CD14-positive monocyte (primary cell): ENCODE measurements at regions of chr13 and their contacts with region 1.

Region 1: DNA sequence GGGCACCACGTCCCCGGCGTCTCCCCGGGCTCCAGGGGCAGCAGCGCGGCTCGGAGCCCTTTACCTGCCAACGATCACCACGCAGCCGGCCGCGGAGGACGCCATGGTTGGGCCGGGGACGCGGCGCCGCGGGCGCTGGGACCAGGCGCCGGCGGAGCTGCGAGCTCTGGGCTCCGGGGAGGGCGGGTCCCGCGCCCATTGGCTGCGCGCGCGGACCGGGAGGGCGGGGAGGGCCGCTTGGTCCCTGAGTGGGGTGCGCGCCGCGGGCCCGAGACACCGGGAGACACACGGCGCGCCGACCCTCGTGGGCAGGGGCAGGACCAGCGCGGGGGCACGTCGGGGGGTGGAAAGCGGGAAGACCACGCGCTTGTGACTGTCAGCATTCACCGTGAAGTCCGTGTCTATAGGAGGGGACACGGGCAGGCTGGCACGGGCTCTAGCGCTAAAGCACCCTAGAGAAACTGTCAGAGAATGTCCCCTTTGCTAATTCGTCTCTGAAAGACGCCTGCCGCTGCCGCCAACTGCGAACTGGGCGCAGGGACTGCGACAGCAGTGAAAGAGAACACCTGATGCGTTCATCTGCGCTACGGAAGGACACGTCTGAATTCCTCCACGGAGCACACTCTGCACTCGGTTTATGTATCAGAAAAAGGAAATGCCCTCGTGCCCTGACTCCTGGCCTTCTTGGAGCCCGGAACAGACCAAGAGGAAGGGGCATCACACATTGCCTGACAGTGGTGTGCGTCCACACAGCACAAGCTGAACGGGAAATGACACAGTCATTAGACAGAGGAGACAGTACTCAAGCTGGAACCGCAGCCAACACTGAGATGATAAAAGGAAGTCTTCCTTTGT is at the start of gene CRYL1:
- DNase-seq: peak; percentile 92 to 97 (median 97)
- H3K4me3 ChIP-seq: peak within 1 kb of the TSS; percentile 45 to 86 (median 78)
- H3K4me3 Mint-ChIP-seq: peak within 1 kb of the TSS; percentile 91 to 97
- H3K27ac ChIP-seq: peak within 1 kb of the TSS; percentile 97 to 99
- H3K27ac Mint-ChIP-seq: peak within 1 kb of the TSS; percentile 90 to 95 (median 91)
- H3K4me1 ChIP-seq: peaks cover 17 to 32% of the 10 kb centered on the region in 2 donors
- H3K4me1 Mint-ChIP-seq: peaks cover 37% of the 10 kb centered on the region
- H3K27me3 ChIP-seq: no peaks in the 10 kb centered on the region
- H3K27me3 Mint-ChIP-seq: peaks cover 0 to 1% (median 0%) of the 10 kb centered on the region in 3 donors
- CTCF ChIP-seq: no peak
- polyA plus RNA-seq, gene CRYL1: 35.0 to 70.2 (median 51.4) TPM

Region 2: GRCh38 chr13:20566898-20567874 is 41.3 kb after region 1 on chr13 and contains the start of gene IFT88:
- intact Hi-C with region 1: loop called (anchors 5 to 10 kb)
- DNase-seq: peak; percentile 76 to 78 (median 77)
- H3K4me3 ChIP-seq: peak within 1 kb of the TSS; percentile 61 to 86 (median 79)
- H3K4me3 Mint-ChIP-seq: peak within 1 kb of the TSS; percentile 89 to 93
- H3K27ac ChIP-seq: peak within 1 kb of the TSS; percentile 90 to 92
- H3K27ac Mint-ChIP-seq: peak within 1 kb of the TSS; percentile 89 to 97 (median 95)
- H3K4me1 ChIP-seq: peaks cover 18 to 20% of the 10 kb centered on the region in 2 donors
- H3K4me1 Mint-ChIP-seq: peaks cover 20% of the 10 kb centered on the region
- H3K27me3 ChIP-seq: no peaks in the 10 kb centered on the region
- H3K27me3 Mint-ChIP-seq: peaks cover 0 to 2% (median 2%) of the 10 kb centered on the region in 3 donors
- CTCF ChIP-seq: no peak
- polyA plus RNA-seq, gene IFT88: 2.9 to 4.5 (median 4.1) TPM